WTC11 (cell line): ENCODE measurements at regions of chr17 and their contacts with region 1.

Region 1: DNA sequence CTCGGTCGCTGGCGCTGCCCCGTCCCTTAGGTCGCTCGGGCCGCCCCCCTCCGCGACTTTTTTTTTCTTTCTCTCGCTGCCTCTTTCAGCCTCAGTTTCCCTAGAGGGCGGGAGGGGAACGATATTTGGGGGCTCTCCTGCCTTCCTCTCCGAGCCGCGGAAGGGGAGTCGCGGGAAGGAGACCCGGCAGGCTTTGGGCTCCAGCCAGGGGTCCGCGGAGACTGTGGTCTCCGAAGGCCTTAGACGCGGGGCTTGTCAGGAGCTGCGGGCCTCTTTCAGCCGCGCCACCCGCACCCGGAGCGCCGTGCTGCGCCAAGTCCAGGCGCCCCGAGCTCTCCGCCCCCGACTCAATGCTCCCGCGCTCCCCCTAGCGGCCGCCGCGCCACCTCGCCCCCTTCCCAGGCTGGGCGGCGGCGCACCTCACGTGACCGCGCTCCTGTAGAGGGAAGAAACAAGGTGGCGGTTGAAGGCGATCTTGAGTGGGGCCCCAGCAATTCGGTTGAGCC is at the start of gene LRRC37B:
- DNase-seq: peak; percentile 90
- ATAC-seq: peak; percentile 92
- H3K4me3 Mint-ChIP-seq: peak within 1 kb of the TSS; percentile 79
- H3K27ac Mint-ChIP-seq: peak within 1 kb of the TSS; percentile 6; the same call in 1 of the 2 replicates
- H3K4me1 Mint-ChIP-seq: peaks cover 22% of the 10 kb centered on the region
- H3K27me3 Mint-ChIP-seq: peaks cover 19% of the 10 kb centered on the region
- CTCF ChIP-seq: peak; percentile 95
- total RNA-seq, gene LRRC37B: 18.7 to 20.7 TPM (median 20.6 TPM) in 3 replicates

Region 2: GRCh38 chr17:31900877-31901276 is 106.1 kb before region 1 on chr17:
- CTCF ChIA-PET with region 1: interaction called, 10 read pairs
- POLR2A ChIA-PET with region 1: no interaction called
- DNase-seq: no peak
- ATAC-seq: no peak
- H3K4me3 Mint-ChIP-seq: no peak overlapping the region
- H3K27ac Mint-ChIP-seq: no peak overlapping the region
- H3K4me1 Mint-ChIP-seq: peaks cover 2% of the 10 kb centered on the region; the same call in 1 of the 2 replicates
- H3K27me3 Mint-ChIP-seq: no peaks in the 10 kb centered on the region
- CTCF ChIP-seq: no peak

Region 3: DNA sequence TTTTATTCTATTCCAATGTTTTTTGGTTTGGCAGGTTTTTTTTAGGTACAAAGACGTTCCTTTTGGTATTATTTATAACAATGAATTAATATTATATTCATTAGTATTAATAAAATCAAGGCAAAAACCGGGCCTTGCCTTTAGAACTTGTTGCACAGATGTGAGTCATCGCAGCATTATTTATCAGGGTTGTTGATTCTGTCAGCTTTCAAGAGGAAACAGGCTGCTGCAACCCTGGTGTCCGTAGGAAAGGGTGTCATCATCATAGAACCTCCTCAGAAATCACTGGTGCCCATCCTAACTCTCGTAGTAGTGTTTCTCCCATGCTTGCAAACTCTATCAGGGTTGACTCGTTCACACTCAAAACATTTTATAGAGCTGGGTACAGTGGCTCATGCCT is 10.0 kb before region 1 on chr17:
- CTCF ChIA-PET with region 1: interaction called, 10 read pairs
- POLR2A ChIA-PET with region 1: no interaction called
- DNase-seq: no peak
- ATAC-seq: no peak
- H3K4me3 Mint-ChIP-seq: no peak overlapping the region
- H3K27ac Mint-ChIP-seq: no peak overlapping the region
- H3K4me1 Mint-ChIP-seq: no peaks in the 10 kb centered on the region
- H3K27me3 Mint-ChIP-seq: no peaks in the 10 kb centered on the region
- CTCF ChIP-seq: no peak

Region 4: GRCh38 chr17:32111141-32111771 is 104.2 kb after region 1 on chr17:
- CTCF ChIA-PET with region 1: interaction called, 15 read pairs
- POLR2A ChIA-PET with region 1: no interaction called
- DNase-seq: peak; percentile 73
- ATAC-seq: peak; percentile 79
- H3K4me3 Mint-ChIP-seq: no peak overlapping the region
- H3K27ac Mint-ChIP-seq: peak overlapping the region; percentile 63; the same call in 1 of the 2 replicates
- H3K4me1 Mint-ChIP-seq: peaks cover 30% of the 10 kb centered on the region
- H3K27me3 Mint-ChIP-seq: no peaks in the 10 kb centered on the region
- CTCF ChIP-seq: peak; percentile 37; the same call in 1 of the 2 replicates

Region 5: DNA sequence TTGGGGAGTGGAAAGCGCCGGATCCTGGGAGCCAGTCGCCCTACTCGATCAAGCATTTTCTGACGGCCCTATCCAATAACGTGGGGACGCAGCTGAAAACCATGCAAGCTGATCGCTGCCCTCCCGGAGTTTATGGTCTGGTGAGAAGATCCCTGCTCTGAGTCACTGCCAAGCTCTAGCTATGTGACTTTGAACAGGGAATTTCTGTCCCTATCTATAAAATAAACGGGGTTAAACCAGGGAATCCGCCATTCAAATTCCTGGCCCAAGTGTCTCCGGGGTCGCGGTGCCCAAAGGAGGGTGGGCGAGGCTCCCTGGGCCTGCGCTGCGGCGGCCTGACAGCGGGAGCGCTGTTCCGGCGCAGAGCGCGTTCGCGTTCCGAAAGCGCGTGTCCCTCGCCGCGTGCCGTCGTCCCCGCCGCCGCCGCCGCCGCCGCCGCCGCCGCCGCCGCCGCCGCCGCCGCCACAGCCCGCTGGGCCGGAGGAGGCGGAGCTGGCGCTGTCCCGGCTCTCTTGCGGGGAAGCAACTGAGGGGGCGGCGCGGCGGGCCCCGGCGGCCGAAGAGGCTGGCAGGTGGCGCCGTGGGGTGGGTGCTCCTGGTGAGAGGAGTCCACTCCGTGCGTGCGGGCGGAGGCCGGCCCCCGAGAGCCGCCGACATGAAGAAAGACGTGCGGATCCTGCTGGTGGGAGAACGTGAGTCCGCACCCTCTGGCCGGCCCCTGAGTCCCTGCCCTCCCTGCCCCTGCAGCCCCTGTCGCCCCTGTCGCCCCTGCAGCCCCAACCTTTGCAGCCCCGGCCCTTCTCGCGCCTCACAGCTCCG is 135.2 kb after region 1 on chr17 and contains the start of gene RHOT1:
- CTCF ChIA-PET with region 1: interaction called, 76 read pairs
- POLR2A ChIA-PET with region 1: no interaction called
- DNase-seq: peak; percentile 76
- ATAC-seq: peak; percentile 63
- H3K4me3 Mint-ChIP-seq: peak within 1 kb of the TSS; percentile 96
- H3K27ac Mint-ChIP-seq: peak within 1 kb of the TSS; percentile 97
- H3K4me1 Mint-ChIP-seq: peaks cover 25% of the 10 kb centered on the region
- H3K27me3 Mint-ChIP-seq: no peaks in the 10 kb centered on the region; the same call in none of the 2 replicates
- CTCF ChIP-seq: no peak
- total RNA-seq, gene RHOT1: 28.9 to 32.8 TPM (median 32.4 TPM) in 3 replicates